Right ventricle myocardium superior (tissue), 1 donor: ENCODE measurements at regions of chr3 and their contacts with region 1.

Region 1: GRCh38 chr3:168047190-168047795 is 48.4 kb downstream of the GOLIM4 start:
- DNase-seq: no peak
- ATAC-seq: peak; percentile 76

Region 2: GRCh38 chr3:168095611-168096209 is 48.4 kb after region 1 on chr3 and contains the start of gene GOLIM4:
- intact Hi-C with region 1: loop called (anchors 5 kb)
- DNase-seq: peak; percentile 96
- ATAC-seq: peak; percentile 95
- total RNA-seq, gene GOLIM4: 52.6 TPM